CD4-positive, alpha-beta memory T cell (primary cell): ENCODE measurements at regions of chr13 and their contacts with region 1.

Region 1: GRCh38 chr13:114132419-114133121 is at the start of gene RASA3:
- DNase-seq: peak; percentile 59 to 72 (median 62)
- H3K4me3 ChIP-seq: peak within 1 kb of the TSS; percentile 92 to 93
- H3K4me3 Mint-ChIP-seq: peak within 1 kb of the TSS; percentile 79 to 100 (median 100)
- H3K27ac ChIP-seq: peak within 1 kb of the TSS; percentile 74
- H3K27ac Mint-ChIP-seq: peak within 1 kb of the TSS; percentile 87 to 100 (median 98)
- H3K4me1 ChIP-seq: peaks cover 45% of the 10 kb centered on the region
- H3K4me1 Mint-ChIP-seq: peaks cover 31 to 69% (median 57%) of the 10 kb centered on the region in 4 donors
- H3K27me3 ChIP-seq: no peaks in the 10 kb centered on the region
- H3K27me3 Mint-ChIP-seq: no peaks in the 10 kb centered on the region
- total RNA-seq, gene RASA3: 171 to 174 TPM

Region 2: DNA sequence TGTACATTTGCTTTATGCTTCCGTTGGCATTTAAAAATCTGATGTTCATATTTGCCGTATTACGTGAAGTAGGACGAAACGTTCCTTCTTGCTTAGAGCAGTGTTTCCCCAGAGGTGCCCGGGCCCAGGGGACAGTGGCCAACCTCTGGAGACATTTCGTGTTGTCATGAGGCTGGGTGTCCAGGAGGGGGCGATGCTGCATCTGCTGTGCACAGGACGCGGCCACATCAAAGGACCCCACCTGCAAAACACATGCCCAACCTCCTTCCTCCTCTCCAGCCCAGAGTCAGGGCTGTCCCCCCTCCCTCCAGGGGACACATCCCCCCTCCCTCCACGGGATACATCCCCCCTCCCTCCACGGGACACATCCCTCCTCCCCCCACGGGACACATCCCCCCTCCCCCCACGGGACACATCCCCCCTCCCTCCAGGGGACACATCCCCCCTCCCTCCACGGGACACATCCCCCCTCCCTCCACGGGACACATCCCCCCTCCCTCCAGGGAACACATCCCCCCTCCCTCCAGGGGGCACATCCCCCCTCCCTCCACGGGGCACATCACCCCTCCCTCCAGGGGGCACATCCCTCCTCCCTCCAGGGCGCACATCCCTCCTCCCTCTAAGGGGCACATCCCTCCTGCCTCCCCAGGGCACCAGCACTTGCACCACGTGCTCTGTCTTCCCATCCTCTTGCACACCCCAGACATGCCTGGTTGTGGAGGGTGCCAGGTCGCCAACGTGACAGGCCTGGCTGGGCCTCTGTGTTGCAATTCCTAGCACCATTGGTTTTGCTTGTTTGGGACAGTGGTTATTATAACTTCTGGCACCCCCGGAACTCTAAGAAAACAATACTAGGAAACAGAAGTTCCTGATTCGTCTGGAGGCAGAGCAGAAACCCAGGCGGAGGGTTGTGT is 315.4 kb before region 1 on chr13:
- CTCF ChIA-PET with region 1: no interaction called
- POLR2A ChIA-PET with region 1: no interaction called
- intact Hi-C with region 1: loop called (anchors 5 kb)
- DNase-seq: peak; percentile 83 to 90 (median 86)
- H3K4me3 ChIP-seq: no peak overlapping the region
- H3K4me3 Mint-ChIP-seq: peak overlapping the region; percentile 43 to 94 (median 78)
- H3K27ac ChIP-seq: no peak overlapping the region
- H3K27ac Mint-ChIP-seq: peak overlapping the region; percentile 37 to 82 (median 68)
- H3K4me1 ChIP-seq: peaks cover 15% of the 10 kb centered on the region
- H3K4me1 Mint-ChIP-seq: peaks cover 14 to 27% (median 20%) of the 10 kb centered on the region in 4 donors
- H3K27me3 ChIP-seq: no peaks in the 10 kb centered on the region
- H3K27me3 Mint-ChIP-seq: peaks cover 1 to 2% of the 10 kb centered on the region in 2 donors

Region 3: GRCh38 chr13:114119196-114119595 is 13.4 kb before region 1 on chr13:
- CTCF ChIA-PET with region 1: no interaction called
- POLR2A ChIA-PET with region 1: interaction called, 113 read pairs
- intact Hi-C with region 1: no loop called
- DNase-seq: no peak
- H3K4me3 ChIP-seq: no peak overlapping the region
- H3K4me3 Mint-ChIP-seq: peak overlapping the region; percentile 21 to 81 (median 76)
- H3K27ac ChIP-seq: peak overlapping the region; percentile 10
- H3K27ac Mint-ChIP-seq: peak overlapping the region; percentile 38 to 94 (median 75)
- H3K4me1 ChIP-seq: peaks cover 84% of the 10 kb centered on the region
- H3K4me1 Mint-ChIP-seq: peaks cover 45 to 90% (median 69%) of the 10 kb centered on the region in 4 donors
- H3K27me3 ChIP-seq: no peaks in the 10 kb centered on the region
- H3K27me3 Mint-ChIP-seq: no peaks in the 10 kb centered on the region

Region 4: GRCh38 chr13:114151565-114152284 is 19.2 kb after region 1 on chr13:
- CTCF ChIA-PET with region 1: interaction called, 11 read pairs
- POLR2A ChIA-PET with region 1: interaction called, 170 read pairs
- intact Hi-C with region 1: loop called (anchors 1 kb)
- DNase-seq: peak; percentile 55 to 79 (median 59)
- H3K4me3 ChIP-seq: peak overlapping the region in 1 of 2 donors; percentile 15
- H3K4me3 Mint-ChIP-seq: peak overlapping the region; percentile 62 to 93 (median 72)
- H3K27ac ChIP-seq: peak overlapping the region; percentile 81
- H3K27ac Mint-ChIP-seq: peak overlapping the region; percentile 95 to 100 (median 100)
- H3K4me1 ChIP-seq: peaks cover 79% of the 10 kb centered on the region
- H3K4me1 Mint-ChIP-seq: peaks cover 60 to 81% (median 72%) of the 10 kb centered on the region in 4 donors
- H3K27me3 ChIP-seq: no peaks in the 10 kb centered on the region
- H3K27me3 Mint-ChIP-seq: no peaks in the 10 kb centered on the region

Region 5: GRCh38 chr13:114226699-114227323 is 94.2 kb after region 1 on chr13:
- CTCF ChIA-PET with region 1: interaction called, 5 read pairs
- POLR2A ChIA-PET with region 1: interaction called, 7 read pairs
- intact Hi-C with region 1: loop called (anchors 1 kb)
- DNase-seq: peak; percentile 75 to 80 (median 78)
- H3K4me3 ChIP-seq: no peak overlapping the region
- H3K4me3 Mint-ChIP-seq: peak overlapping the region; percentile 7 to 74 (median 48)
- H3K27ac ChIP-seq: no peak overlapping the region
- H3K27ac Mint-ChIP-seq: peak overlapping the region; percentile 69 to 89 (median 78)
- H3K4me1 ChIP-seq: peaks cover 34% of the 10 kb centered on the region
- H3K4me1 Mint-ChIP-seq: peaks cover 26 to 45% (median 36%) of the 10 kb centered on the region in 4 donors
- H3K27me3 ChIP-seq: no peaks in the 10 kb centered on the region
- H3K27me3 Mint-ChIP-seq: peaks cover 3% of the 10 kb centered on the region in 2 donors